Aorta (tissue), 5 donors: ENCODE measurements at regions of chr19 and their contacts with region 1.

Region 1: DNA sequence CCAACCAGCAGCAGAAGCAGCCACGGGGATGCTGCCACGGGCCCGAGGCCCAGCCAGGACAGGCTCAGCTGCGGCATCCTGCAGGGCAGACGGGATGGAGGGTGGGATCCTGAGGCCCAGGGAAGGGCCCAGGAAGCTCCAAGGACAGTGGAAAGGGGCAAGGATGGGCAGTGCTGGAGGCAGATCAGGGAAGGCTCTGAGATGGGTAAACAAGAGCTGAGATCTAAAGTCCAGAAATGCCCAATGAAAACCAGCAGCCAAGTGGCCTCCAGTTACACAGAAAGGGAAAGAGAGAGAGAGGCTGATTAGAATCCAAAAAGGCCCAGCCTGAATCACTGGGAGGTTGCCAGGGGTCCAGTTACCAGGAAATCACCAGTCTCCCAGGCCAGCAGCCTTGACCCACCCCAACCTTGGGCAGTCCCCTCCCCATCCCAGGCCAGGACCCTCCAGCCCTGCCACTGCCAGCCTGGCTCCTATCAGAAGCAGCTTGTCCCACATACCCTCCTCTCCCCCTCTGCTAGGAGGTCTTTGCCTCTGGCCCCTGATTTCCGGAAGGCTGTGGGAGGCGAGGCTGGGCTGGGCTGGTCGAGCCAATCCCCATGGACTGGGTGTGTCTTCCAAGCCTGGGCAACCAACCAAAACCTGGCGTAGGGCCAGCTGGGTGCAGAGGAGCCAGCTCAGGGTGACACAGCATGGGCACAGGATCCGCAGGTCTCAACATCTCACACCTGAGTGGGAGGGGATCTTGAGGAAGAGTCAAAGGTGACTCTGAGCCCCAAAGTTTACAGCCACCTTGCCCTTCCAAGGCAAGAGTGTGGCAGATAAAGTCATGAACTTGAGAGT is at the start of gene CYP4F11:
- DNase-seq: peak; percentile 86 to 94
- ATAC-seq: no peak
- H3K4me3 ChIP-seq: no peak within 1 kb of the TSS
- H3K27ac ChIP-seq: peak within 1 kb of the TSS in 1 of 2 donors; percentile 79
- H3K4me1 ChIP-seq: no peaks in the 10 kb centered on the region
- H3K27me3 ChIP-seq: no peaks in the 10 kb centered on the region
- total RNA-seq, gene CYP4F11: 3.9 to 11.0 TPM

Region 2: DNA sequence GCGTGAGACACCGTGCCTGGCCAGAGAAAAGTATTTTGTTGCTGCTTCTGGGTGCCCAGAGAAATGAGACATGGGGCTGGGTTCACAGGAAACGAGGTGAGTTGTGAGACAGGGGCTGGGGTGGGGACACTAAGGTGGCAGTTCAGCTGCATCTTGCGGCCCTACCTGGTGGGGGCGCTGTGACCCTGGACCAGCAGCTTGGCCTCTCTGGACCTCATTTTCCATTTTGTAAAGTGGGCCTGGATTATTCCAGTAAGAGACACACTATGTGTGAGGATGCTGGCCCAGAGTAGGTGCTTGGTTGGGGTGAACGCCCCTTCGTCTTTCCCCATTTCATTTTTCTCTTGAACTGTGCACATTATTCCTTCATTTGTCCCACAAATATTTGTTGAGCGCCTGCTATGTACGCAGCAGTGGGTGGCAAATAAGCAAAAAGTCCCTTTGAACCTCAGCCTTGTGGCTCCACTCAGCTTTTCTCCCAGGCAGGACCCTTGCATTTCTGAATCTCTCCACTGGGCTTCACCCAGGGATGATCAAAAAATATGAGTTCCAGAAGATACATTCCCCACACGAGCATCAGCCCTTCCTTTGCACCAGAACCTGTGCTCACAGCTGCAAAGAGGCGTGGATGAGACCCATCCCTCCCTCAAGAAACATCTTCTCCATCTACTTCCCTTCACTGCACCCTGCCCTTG is 92.5 kb before region 1 on chr19:
- intact Hi-C with region 1: no loop called
- DNase-seq: no peak
- ATAC-seq: no peak
- H3K4me3 ChIP-seq: no peak overlapping the region
- H3K27ac ChIP-seq: no peak overlapping the region
- H3K4me1 ChIP-seq: no peaks in the 10 kb centered on the region
- H3K27me3 ChIP-seq: no peaks in the 10 kb centered on the region

Region 3: DNA sequence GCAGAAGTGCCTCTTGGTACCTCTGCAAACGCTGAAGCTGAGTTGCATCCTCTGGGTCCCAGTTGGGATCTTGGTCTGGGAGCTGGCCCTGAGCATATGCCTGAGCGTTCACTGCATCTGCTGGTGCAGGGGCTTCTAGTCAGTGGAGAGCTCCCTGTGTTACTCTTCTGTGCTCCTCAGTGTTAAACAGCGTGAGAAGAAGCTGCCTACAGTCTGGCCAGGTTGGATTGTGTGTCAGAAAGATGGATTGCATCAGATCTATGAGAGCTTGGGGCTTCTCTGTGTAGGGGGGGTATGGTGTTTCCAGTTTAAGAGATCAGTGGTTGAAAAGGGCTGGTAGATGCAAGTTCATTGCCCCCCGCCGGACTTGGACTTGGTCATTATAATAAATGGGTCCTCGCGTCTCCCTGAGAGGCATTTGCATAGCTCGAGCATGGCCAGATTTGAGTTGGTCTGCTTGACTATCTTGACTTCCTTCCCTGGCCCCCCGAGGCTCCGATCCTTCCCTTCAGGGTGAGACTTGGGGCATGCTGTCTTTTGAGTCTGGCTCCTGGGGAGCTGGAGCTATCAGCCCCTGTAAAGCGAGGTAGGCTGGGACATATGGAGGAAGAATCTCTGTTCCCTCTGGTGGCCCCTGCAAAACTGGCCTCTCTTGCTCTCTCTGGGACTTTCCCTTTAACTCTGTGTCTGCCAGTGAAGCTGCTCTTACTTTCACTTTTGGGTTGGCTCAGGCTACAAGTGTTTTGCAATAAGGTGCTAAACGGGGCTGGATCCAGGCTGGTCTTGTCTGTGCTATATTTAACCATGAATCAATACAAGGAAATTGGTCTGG is 67.1 kb after region 1 on chr19:
- intact Hi-C with region 1: loop called (anchors 2 kb)
- DNase-seq: peak in 1 of 2 donors; percentile 58
- ATAC-seq: peak; percentile 39
- H3K4me3 ChIP-seq: peak overlapping the region; percentile 3 to 45
- H3K27ac ChIP-seq: no peak overlapping the region
- H3K4me1 ChIP-seq: no peaks in the 10 kb centered on the region
- H3K27me3 ChIP-seq: no peaks in the 10 kb centered on the region